ENCODE measurements at regions of chr21 and their contacts with region 1.

Region 1: GRCh38 chr21:46056450-46056903 is 41.4 kb upstream of the COL6A2 start:
- DNase-seq: peak; percentile 98
- H3K4me3 ChIP-seq: peak overlapping the region in 3 of 4 donors; percentile 22 to 33 (median 25)
- H3K27ac ChIP-seq: peak overlapping the region; percentile 90 to 97 (median 94)
- H3K4me1 ChIP-seq: peaks cover 0 to 62% (median 50%) of the 10 kb centered on the region in 4 donors
- H3K27me3 ChIP-seq: no peaks in the 10 kb centered on the region
- CTCF ChIP-seq: no peak
- EP300 ChIP-seq: peak in 3 of 4 donors; percentile 81 to 90 (median 89)
- POLR2A ChIP-seq: peak; percentile 45 to 71

Region 2: DNA sequence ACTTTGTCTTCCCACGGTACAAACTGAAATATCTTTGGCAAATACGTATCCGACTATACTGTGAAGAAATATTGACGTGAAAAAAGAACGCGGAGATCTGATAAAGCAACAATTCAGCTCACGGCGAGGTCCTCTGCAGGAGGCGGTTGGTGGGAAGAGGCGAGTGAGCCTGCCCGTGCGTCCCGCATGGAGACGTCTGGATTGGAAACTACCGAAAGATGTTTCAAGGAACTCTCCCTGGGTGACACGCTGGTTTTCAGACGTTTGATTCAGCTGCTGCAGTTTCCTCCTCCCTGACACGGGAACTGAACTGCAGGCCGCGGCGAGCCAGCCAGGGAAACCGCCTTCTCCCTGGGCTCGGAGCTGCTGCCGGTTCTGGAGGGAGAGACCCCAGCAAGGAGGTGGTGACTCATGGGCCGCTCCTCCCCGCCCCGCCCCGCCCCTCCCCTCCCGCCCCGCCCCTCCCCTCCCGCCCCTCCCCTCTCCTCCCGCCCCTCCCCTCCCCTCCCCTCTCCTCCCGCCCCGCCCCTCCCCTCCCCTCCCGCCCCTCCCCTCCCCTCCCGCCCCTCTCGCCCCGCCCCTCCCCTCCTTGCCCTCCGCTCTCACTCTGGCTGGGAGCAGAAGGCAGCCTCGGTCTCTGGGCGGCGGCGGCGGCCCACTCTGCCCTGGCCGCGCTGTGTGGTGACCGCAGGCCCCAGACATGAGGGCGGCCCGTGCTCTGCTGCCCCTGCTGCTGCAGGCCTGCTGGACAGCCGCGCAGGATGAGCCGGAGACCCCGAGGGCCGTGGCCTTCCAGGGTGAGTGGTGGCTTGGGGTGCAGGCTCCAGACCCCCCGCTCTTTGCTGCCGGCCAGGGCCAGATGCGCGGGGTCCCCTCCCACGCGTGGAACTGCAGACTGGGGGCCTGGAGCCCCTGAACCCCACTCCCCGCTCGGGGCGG is 75.1 kb before region 1 on chr21 and contains the start of gene COL6A1:
- intact Hi-C with region 1: loop called (anchors 2 kb)
- DNase-seq: peak; percentile 96
- H3K4me3 ChIP-seq: peak within 1 kb of the TSS; percentile 79 to 99 (median 94)
- H3K27ac ChIP-seq: peak within 1 kb of the TSS; percentile 95 to 98 (median 98)
- H3K4me1 ChIP-seq: peaks cover 0 to 70% (median 63%) of the 10 kb centered on the region in 4 donors
- H3K27me3 ChIP-seq: no peaks in the 10 kb centered on the region
- CTCF ChIP-seq: no peak
- EP300 ChIP-seq: peak in 1 of 4 donors; percentile 4
- POLR2A ChIP-seq: peak; percentile 73 to 85
- total RNA-seq, gene COL6A1: 622 to 1,755 (median 1,184) TPM

Region 3: DNA sequence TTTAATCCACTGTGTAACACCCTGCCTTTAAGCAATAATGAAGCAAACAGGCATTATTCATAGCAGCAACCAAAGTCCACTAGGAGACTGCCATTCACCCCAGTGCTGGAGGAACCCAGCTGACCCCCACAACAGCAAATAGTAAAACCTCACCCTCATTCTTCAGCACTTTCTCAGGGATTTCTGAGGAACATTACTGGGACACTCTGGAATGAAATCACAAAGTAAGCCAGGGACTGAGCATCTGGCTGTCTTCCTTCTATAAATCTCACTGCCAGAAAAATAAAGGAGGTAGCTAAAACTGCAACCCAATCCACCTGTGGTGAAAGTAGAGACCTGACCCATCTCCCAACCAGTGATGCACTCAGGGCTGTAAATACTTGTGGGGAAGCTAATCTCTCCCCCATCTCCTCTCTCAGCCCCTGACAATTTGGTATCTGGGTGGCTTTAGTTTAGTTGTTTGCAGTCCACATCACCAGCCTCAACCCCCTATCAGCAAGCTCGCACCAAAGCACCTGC is 27.8 kb before region 1 on chr21:
- intact Hi-C with region 1: loop called (anchors 2 kb)
- DNase-seq: peak; percentile 70
- H3K4me3 ChIP-seq: no peak overlapping the region
- H3K27ac ChIP-seq: peak overlapping the region; percentile 86 to 96 (median 90)
- H3K4me1 ChIP-seq: peaks cover 0 to 63% (median 55%) of the 10 kb centered on the region in 4 donors
- H3K27me3 ChIP-seq: no peaks in the 10 kb centered on the region
- CTCF ChIP-seq: no peak
- EP300 ChIP-seq: no peak
- POLR2A ChIP-seq: no peak

Region 4: GRCh38 chr21:46097336-46098293 is 41.1 kb after region 1 on chr21 and contains the start of gene COL6A2:
- intact Hi-C with region 1: loop called (anchors 2 kb)
- DNase-seq: peak; percentile 91
- H3K4me3 ChIP-seq: peak within 1 kb of the TSS; percentile 89 to 98 (median 92)
- H3K27ac ChIP-seq: peak within 1 kb of the TSS; percentile 98 to 100 (median 99)
- H3K4me1 ChIP-seq: peaks cover 0 to 69% (median 52%) of the 10 kb centered on the region in 4 donors
- H3K27me3 ChIP-seq: no peaks in the 10 kb centered on the region
- CTCF ChIP-seq: peak in 1 of 4 experiments; percentile 49
- EP300 ChIP-seq: no peak
- POLR2A ChIP-seq: peak; percentile 44 to 89
- total RNA-seq, gene COL6A2: 570 to 1,745 (median 1,082) TPM

Region 5: DNA sequence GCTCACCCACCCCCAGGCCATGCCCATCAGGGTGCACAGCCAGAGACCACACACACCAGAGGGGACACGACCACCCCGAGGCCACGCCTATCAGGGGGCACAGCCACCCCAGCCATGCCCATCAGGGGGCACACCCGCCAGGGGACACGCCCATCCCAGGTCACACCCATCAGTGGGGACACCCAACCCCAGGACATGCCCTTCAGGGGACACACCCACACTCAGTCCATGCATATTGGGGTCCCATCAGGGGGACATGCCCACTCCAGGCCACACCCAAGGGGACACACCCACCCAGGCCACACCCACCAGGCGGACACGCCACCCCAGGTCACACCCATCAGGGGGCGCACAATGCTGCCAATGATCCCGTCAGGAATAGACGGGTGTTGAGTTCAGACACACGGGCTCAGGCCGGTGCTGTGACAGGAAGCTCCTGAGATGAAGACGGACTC is 208.2 kb after region 1 on chr21:
- intact Hi-C with region 1: no loop called
- DNase-seq: no peak
- H3K4me3 ChIP-seq: no peak overlapping the region
- H3K27ac ChIP-seq: no peak overlapping the region
- H3K4me1 ChIP-seq: no peaks in the 10 kb centered on the region
- H3K27me3 ChIP-seq: no peaks in the 10 kb centered on the region
- CTCF ChIP-seq: no peak
- EP300 ChIP-seq: no peak
- POLR2A ChIP-seq: no peak

Measured in sigmoid colon (tissue), 7 donors.